ENCODE measurements at regions of chr2 and their contacts with region 1.

Region 1: DNA sequence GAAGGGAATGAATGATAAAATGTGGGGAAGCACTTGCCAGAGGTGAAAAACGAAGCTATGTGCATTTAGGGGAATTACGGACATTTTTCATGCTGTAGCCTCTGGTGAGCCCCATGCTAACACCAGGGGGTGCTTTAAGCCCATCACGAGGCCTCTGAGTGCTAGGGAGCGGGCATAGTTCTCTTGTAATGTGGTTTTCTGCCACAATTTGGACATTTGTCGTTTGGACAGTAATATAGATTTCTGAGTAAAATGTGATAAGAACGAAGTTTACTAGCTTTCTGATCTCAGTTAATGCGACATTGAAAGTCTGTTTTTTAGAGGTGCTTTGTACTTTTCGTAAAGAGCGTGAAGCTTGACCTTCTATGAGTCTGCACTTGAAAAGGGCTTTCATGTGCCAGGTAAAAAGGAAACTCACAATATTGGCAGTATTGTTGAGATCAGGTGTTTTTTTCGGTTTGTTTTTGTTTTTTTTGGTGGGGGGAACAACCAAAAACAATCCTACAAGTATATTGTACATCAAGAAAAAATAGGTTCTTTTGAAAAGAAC is 50.6 kb downstream of the TRAF3IP1 start:
- DNase-seq: peak in 2 of 3 donors; percentile 70 to 82
- ATAC-seq: peak; percentile 91
- H3K4me3 ChIP-seq: no peak overlapping the region
- H3K4me1 ChIP-seq: no peaks in the 10 kb centered on the region
- CTCF ChIP-seq: peak; percentile 57

Region 2: GRCh38 chr2:238139196-238140039 is 231.5 kb before region 1 on chr2:
- intact Hi-C with region 1: no loop called
- DNase-seq: no peak
- ATAC-seq: no peak
- H3K4me3 ChIP-seq: no peak overlapping the region
- H3K4me1 ChIP-seq: peaks cover 19% of the 10 kb centered on the region
- CTCF ChIP-seq: peak; percentile 52

Region 3: DNA sequence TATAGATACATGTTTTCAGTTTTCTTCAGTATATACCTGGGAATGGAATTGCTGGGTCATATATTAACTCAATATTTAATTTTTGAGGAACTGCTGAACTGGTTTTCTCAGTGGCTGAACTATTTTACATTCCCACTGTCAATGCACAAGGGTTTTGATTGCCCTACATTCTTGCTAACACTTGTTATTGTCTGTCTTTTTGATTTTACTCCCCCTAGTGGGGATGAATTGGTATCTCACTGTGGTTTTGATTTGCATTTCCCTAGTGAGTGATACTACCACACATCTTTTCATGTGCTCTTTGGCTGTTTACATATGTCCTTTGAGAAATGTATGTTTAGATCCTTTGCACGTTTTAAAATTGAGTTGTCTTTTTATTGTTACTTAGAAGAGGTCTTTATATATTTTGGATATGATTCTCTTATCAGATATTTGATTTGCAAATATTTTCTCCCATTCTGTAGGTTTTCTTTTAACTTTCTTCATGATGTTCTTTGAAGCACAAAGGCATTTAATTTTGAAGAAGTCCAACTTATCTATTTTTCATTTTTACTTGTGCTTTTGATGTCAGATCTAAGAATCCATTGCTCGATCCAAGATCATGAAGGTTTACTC is 92.0 kb after region 1 on chr2:
- intact Hi-C with region 1: loop called in 1 of 2 experiments (anchors 2 kb)
- DNase-seq: peak in 1 of 3 donors; percentile 25
- ATAC-seq: peak; percentile 78
- H3K4me3 ChIP-seq: no peak overlapping the region
- H3K4me1 ChIP-seq: no peaks in the 10 kb centered on the region
- CTCF ChIP-seq: peak; percentile 40

Region 4: GRCh38 chr2:238784671-238785527 is 414.0 kb after region 1 on chr2:
- intact Hi-C with region 1: loop called in 1 of 2 experiments (anchors 10 kb)
- DNase-seq: peak in 2 of 3 donors; percentile 65 to 66
- ATAC-seq: peak; percentile 64
- H3K4me3 ChIP-seq: no peak overlapping the region
- H3K4me1 ChIP-seq: no peaks in the 10 kb centered on the region
- CTCF ChIP-seq: peak; percentile 75